ENCODE measurements at regions of chr5 and their contacts with region 1.

Region 1: DNA sequence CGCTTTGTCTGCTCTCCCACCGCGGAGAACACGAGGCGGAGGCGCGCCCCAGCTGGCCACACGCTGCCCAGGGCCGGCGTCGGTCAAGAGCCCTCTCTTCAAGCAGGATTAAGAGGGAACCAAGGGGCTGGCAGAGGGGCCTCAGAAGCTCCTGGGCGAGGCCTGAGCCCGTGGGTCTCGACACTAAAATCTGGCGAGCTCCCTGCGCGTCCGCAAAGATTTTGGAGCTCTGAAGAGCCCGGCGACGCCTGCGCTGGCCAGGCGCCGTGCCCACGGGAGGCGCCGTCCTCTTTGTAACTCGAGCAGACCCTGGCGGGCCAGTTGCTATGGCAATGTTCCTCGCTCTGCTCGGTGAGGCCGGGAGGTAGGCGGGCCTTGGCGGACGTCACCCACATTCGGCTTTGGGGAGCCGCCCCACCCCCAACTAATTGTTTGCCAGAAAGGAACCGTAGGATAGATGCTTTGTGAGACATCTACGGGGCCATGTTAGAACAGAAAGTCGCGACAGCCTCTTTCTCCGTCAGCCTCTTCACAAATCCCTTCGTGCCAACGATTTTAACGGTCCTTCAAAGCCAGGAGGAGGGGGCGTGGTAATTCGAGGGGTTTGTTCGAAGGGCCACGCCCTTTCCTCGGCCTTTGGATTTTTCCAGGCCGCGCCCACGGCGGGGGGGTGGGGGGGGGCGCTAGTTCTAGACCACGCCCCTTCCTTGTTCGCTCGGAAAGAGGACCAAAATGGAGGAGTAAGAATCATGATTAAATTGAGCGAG is 714 bp upstream of the CNOT8 start:
- DNase-seq: peak; percentile 73 to 94 (median 88)
- ATAC-seq: peak; percentile 71
- H3K4me3 ChIP-seq: peak overlapping the region; percentile 74
- H3K4me3 Mint-ChIP-seq: peak overlapping the region; percentile 85 to 98 (median 95)
- H3K27ac ChIP-seq: peak overlapping the region; percentile 97
- H3K27ac Mint-ChIP-seq: peak overlapping the region; percentile 95 to 100 (median 98)
- H3K4me1 ChIP-seq: peaks cover 25 to 30% of the 10 kb centered on the region in 2 donors
- H3K4me1 Mint-ChIP-seq: peaks cover 33 to 40% (median 38%) of the 10 kb centered on the region in 7 donors
- H3K27me3 ChIP-seq: no peaks in the 10 kb centered on the region
- H3K27me3 Mint-ChIP-seq: no peaks in the 10 kb centered on the region

Region 2: DNA sequence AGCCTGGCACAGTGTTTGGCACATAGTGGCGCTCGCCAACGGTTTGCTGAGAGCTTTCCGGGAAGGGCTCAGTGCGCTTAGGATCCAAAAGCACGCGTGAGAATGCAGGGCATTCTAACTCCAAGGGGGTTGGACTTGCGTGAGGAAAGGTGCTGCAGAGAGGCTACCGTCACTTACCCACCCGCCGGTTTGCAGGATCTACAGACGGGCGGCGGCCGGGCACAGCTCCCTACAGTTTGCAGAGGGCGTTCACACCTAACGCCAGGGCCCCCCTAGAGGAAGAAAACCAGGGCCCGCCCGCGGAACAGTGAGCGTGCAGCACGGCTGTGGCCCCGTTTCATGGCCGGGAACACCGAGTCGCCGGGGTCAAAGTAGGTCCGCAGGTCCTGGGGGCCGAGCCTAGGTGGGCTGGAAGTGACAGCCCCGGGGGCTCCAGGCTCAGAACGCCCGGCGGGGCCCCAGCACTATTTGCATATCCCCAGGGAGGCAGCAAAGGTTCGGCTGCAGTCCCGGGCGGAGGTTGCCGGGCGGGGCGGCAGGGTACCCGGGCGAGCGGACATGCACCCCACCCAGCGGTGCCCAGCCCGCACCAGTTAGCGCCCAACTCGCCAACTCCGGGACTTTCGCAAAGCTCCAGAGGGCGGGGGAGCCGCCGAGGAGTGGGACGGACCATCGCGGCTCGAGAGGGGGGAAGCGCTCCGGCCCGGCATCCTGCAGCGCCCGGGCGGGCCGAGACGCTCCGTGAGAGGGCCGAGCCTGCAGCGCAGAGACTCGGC is 667.7 kb before region 1 on chr5:
- CTCF ChIA-PET with region 1: no interaction called
- POLR2A ChIA-PET with region 1: no interaction called
- intact Hi-C with region 1: loop called (anchors 5 to 10 kb)
- DNase-seq: peak; percentile 63 to 82 (median 79)
- ATAC-seq: peak; percentile 93
- H3K4me3 ChIP-seq: peak overlapping the region; percentile 94
- H3K4me3 Mint-ChIP-seq: peak overlapping the region; percentile 82 to 93 (median 88)
- H3K27ac ChIP-seq: peak overlapping the region; percentile 80
- H3K27ac Mint-ChIP-seq: peak overlapping the region; percentile 71 to 83 (median 78)
- H3K4me1 ChIP-seq: peaks cover 16 to 22% of the 10 kb centered on the region in 2 donors
- H3K4me1 Mint-ChIP-seq: peaks cover 33 to 49% (median 41%) of the 10 kb centered on the region in 7 donors
- H3K27me3 ChIP-seq: no peaks in the 10 kb centered on the region
- H3K27me3 Mint-ChIP-seq: peaks cover 0 to 12% (median 0%) of the 10 kb centered on the region in 5 donors

Region 3: DNA sequence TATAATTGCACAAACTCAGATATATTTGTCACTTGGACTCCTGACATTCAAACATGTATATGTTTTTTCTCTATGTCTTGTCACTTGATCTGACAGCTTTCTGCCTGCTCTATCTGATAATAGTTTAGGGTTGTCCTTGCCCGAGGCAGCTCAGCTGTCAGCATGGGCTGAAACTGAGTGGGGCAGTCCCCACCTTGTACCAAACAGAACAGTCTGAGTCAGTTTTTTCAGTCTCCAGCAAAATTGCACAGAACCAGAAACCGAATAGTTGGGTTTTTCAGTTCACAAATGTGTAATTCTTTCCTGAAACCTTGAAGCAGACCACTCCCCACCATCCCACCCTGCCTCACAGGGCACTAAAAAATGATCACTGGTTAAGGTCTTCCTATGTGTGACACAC is 370.2 kb before region 1 on chr5:
- CTCF ChIA-PET with region 1: no interaction called
- POLR2A ChIA-PET with region 1: no interaction called
- intact Hi-C with region 1: no loop called
- DNase-seq: peak in 1 of 9 donors; percentile 29
- ATAC-seq: no peak
- H3K4me3 ChIP-seq: no peak overlapping the region
- H3K4me3 Mint-ChIP-seq: no peak overlapping the region
- H3K27ac ChIP-seq: no peak overlapping the region
- H3K27ac Mint-ChIP-seq: no peak overlapping the region
- H3K4me1 ChIP-seq: no peaks in the 10 kb centered on the region
- H3K4me1 Mint-ChIP-seq: peaks cover 4 to 17% (median 10%) of the 10 kb centered on the region in 7 donors
- H3K27me3 ChIP-seq: peaks cover 11 to 24% of the 10 kb centered on the region in 2 donors
- H3K27me3 Mint-ChIP-seq: peaks cover 70 to 89% (median 71%) of the 10 kb centered on the region in 5 donors

Region 4: DNA sequence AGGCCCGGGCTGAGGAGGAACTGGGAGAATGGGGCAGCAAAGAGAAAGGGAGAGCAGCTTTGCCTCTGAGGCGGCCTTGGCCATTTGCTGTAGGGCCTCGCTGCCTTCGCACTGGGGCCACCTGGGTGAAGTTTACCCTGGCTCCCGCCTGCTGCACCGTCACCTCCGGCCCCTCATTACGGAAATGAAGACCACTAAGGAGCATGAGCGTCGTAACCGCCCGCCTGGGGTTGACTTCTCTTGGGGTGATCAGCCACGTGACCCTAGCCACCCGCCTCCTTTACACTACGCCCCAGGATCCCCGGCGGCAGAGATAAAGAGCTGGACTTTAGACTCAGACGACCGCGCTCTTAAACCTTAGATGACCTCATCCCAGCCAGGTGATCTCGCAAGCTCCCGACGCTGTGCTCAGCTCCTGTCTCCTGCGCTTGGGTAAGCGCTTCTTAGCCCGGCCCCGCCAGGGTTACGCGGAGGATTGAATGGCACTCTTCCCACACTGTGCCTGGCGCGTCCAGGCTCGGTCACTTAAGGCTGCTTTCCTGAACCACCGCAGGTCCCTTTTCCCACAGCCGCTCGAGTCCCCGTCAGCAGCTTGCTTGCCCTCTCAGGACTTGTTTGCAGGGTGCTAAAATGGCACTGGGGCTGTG is 210.5 kb before region 1 on chr5:
- CTCF ChIA-PET with region 1: no interaction called
- POLR2A ChIA-PET with region 1: interaction called, 3 read pairs
- intact Hi-C with region 1: loop called (anchors 2 kb)
- DNase-seq: no peak
- ATAC-seq: peak; percentile 52
- H3K4me3 ChIP-seq: peak overlapping the region; percentile 54
- H3K4me3 Mint-ChIP-seq: peak overlapping the region; percentile 72 to 87 (median 84)
- H3K27ac ChIP-seq: no peak overlapping the region
- H3K27ac Mint-ChIP-seq: peak overlapping the region in 1 of 9 donors; percentile 59
- H3K4me1 ChIP-seq: peaks cover 0 to 3% of the 10 kb centered on the region in 2 donors
- H3K4me1 Mint-ChIP-seq: peaks cover 10 to 19% (median 16%) of the 10 kb centered on the region in 7 donors
- H3K27me3 ChIP-seq: peaks cover 0 to 12% of the 10 kb centered on the region in 2 donors
- H3K27me3 Mint-ChIP-seq: peaks cover 18 to 46% (median 28%) of the 10 kb centered on the region in 5 donors

Region 5: GRCh38 chr5:154754460-154755360 is 103.0 kb before region 1 on chr5:
- CTCF ChIA-PET with region 1: no interaction called
- POLR2A ChIA-PET with region 1: interaction called, 20 read pairs
- intact Hi-C with region 1: loop called (anchors 1 kb)
- DNase-seq: peak; percentile 97 to 99 (median 99)
- ATAC-seq: peak; percentile 94
- H3K4me3 ChIP-seq: peak overlapping the region; percentile 72
- H3K4me3 Mint-ChIP-seq: peak overlapping the region; percentile 88 to 98 (median 92)
- H3K27ac ChIP-seq: peak overlapping the region; percentile 96
- H3K27ac Mint-ChIP-seq: peak overlapping the region; percentile 92 to 98 (median 98)
- H3K4me1 ChIP-seq: peaks cover 30 to 32% of the 10 kb centered on the region in 2 donors
- H3K4me1 Mint-ChIP-seq: peaks cover 27 to 45% (median 33%) of the 10 kb centered on the region in 7 donors
- H3K27me3 ChIP-seq: no peaks in the 10 kb centered on the region
- H3K27me3 Mint-ChIP-seq: no peaks in the 10 kb centered on the region

Region 6: GRCh38 chr5:154829589-154830218 is 28.0 kb before region 1 on chr5:
- CTCF ChIA-PET with region 1: no interaction called
- POLR2A ChIA-PET with region 1: interaction called, 25 read pairs
- intact Hi-C with region 1: loop called (anchors 1 to 2 kb)
- DNase-seq: peak in 8 of 9 donors; percentile 12 to 51 (median 36)
- ATAC-seq: peak; percentile 45
- H3K4me3 ChIP-seq: peak overlapping the region; percentile 21
- H3K4me3 Mint-ChIP-seq: peak overlapping the region; percentile 49 to 84 (median 75)
- H3K27ac ChIP-seq: peak overlapping the region; percentile 66
- H3K27ac Mint-ChIP-seq: peak overlapping the region; percentile 85 to 91 (median 89)
- H3K4me1 ChIP-seq: peaks cover 18 to 28% of the 10 kb centered on the region in 2 donors
- H3K4me1 Mint-ChIP-seq: peaks cover 21 to 64% (median 55%) of the 10 kb centered on the region in 7 donors
- H3K27me3 ChIP-seq: no peaks in the 10 kb centered on the region
- H3K27me3 Mint-ChIP-seq: no peaks in the 10 kb centered on the region

Region 7: DNA sequence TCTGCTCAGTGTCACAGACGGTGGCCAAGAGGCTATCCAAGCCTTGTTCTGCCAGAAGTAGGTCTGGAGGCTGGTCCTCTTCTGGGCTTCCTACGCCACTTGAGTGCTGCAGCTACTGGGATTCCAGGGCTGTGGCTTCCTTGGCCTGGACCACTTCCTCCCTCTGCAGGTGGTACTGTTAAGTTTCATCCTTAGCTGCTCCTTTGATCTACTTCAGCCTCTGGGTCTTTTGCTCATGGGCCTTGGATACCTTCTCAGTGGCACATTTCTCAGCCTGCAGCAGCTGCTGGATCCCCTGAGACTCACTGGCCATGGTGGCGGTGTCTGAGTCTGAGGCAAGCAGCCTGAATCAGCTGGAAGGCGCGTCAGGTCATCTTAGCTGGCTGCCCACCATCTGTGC is 11.0 kb after region 1 on chr5:
- CTCF ChIA-PET with region 1: no interaction called
- POLR2A ChIA-PET with region 1: interaction called, 6 read pairs
- intact Hi-C with region 1: loop called in 1 of 2 experiments (anchors 1 kb)
- DNase-seq: peak in 1 of 9 donors; percentile 32
- ATAC-seq: peak; percentile 50
- H3K4me3 ChIP-seq: no peak overlapping the region
- H3K4me3 Mint-ChIP-seq: no peak overlapping the region
- H3K27ac ChIP-seq: peak overlapping the region; percentile 35
- H3K27ac Mint-ChIP-seq: peak overlapping the region in 7 of 9 donors; percentile 13 to 65 (median 59)
- H3K4me1 ChIP-seq: no peaks in the 10 kb centered on the region
- H3K4me1 Mint-ChIP-seq: peaks cover 10 to 29% (median 23%) of the 10 kb centered on the region in 7 donors
- H3K27me3 ChIP-seq: no peaks in the 10 kb centered on the region
- H3K27me3 Mint-ChIP-seq: no peaks in the 10 kb centered on the region

Region 8: DNA sequence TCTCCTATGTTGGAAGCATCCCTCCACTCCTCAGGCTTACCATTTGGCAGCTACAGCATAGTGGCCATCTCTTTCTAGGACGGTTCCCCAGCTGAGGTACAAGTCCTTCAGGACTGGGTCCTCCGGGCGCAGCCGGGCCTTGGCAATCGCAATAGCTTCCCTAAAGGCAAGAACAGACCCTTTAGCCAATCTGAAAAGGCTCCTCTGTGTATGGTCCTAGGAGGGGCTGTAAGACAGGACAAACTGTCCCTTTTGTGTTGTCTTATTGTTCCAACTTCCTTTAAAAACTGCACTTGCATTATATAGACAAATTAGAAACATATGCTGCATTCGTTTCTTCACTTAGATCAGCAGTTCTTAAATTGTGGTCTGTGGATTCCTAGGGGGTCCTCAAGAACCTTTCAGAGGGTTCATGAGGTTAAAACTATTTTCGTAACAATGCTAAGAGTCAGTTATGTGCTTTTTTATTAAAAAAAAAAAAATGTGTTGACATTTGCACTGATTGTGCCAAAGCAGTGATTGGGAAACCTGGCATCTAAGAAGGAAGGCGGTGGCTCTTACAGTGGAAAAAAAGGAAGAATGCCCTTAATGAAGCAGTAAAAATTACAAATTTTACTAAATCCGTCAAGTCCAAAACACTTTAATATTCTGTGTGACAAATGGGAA is 41.6 kb after region 1 on chr5:
- CTCF ChIA-PET with region 1: no interaction called
- POLR2A ChIA-PET with region 1: no interaction called
- intact Hi-C with region 1: no loop called
- DNase-seq: no peak
- ATAC-seq: no peak
- H3K4me3 ChIP-seq: no peak overlapping the region
- H3K4me3 Mint-ChIP-seq: no peak overlapping the region
- H3K27ac ChIP-seq: no peak overlapping the region
- H3K27ac Mint-ChIP-seq: peak overlapping the region in 1 of 9 donors; percentile 23
- H3K4me1 ChIP-seq: no peaks in the 10 kb centered on the region
- H3K4me1 Mint-ChIP-seq: peaks cover 0 to 3% (median 0%) of the 10 kb centered on the region in 7 donors
- H3K27me3 ChIP-seq: no peaks in the 10 kb centered on the region
- H3K27me3 Mint-ChIP-seq: no peaks in the 10 kb centered on the region